ENCODE measurements at regions of chr7 and their contacts with region 1.

Region 1: GRCh38 chr7:39465055-39465929 is 100.9 kb upstream of the YAE1 start:
- DNase-seq: no peak
- ATAC-seq: peak; percentile 73 to 91
- H3K4me3 ChIP-seq: peak overlapping the region in 2 of 4 donors; percentile 11 to 18
- H3K27ac ChIP-seq: no peak overlapping the region
- H3K4me1 ChIP-seq: no peaks in the 10 kb centered on the region
- H3K27me3 ChIP-seq: no peaks in the 10 kb centered on the region
- CTCF ChIP-seq: peak; percentile 40 to 70 (median 58)
- POLR2A ChIP-seq: no peak

Region 2: GRCh38 chr7:38822549-38822948 is 642.7 kb before region 1 on chr7:
- in situ Hi-C with region 1: loop called in 1 of 4 experiments (anchors 25 kb)
- intact Hi-C with region 1: no loop called
- DNase-seq: no peak
- ATAC-seq: no peak
- H3K4me3 ChIP-seq: no peak overlapping the region
- H3K27ac ChIP-seq: no peak overlapping the region
- H3K4me1 ChIP-seq: peaks cover 0 to 13% of the 10 kb centered on the region in 2 donors
- H3K27me3 ChIP-seq: no peaks in the 10 kb centered on the region
- CTCF ChIP-seq: no peak
- POLR2A ChIP-seq: no peak

Region 3: DNA sequence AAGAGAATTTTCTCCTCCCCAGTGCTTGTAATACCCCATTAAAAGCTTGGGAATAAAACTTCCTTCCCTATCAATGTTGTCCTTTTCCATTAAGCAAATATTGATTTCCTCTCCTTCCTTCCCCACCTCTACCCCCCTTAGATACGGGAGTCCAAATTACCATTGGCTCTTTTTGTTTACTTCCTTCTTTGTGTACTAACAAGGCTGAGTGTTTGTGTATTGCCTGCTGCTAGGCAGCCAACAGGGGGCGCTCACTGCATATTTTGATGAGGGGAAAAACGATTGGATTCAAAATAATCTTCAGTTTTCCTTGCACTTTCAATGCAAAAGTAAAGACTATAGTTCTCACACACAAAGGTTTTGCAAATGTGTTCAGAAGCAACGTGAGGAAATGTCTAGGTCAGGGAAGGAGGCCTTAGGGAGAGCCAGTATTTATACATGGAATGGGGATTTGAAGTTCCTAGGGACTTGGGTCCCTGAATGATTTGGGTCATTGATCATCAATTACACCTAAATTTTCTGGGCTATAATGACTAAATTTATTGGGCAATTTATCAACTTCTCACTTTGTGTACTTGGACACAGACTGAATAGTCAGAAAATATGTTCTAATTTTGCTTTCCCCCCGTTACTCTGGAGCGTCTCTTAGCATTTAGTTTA is 532.7 kb before region 1 on chr7:
- in situ Hi-C with region 1: loop called (anchors 10 to 25 kb)
- intact Hi-C with region 1: no loop called
- DNase-seq: peak in 1 of 2 donors; percentile 15
- ATAC-seq: no peak
- H3K4me3 ChIP-seq: no peak overlapping the region
- H3K27ac ChIP-seq: no peak overlapping the region
- H3K4me1 ChIP-seq: no peaks in the 10 kb centered on the region
- H3K27me3 ChIP-seq: no peaks in the 10 kb centered on the region
- CTCF ChIP-seq: peak; percentile 41 to 70 (median 51)
- POLR2A ChIP-seq: no peak

Region 4: GRCh38 chr7:39741942-39742623 is 276.8 kb after region 1 on chr7:
- in situ Hi-C with region 1: no loop called
- intact Hi-C with region 1: no loop called
- DNase-seq: no peak
- ATAC-seq: no peak
- H3K4me3 ChIP-seq: no peak overlapping the region
- H3K27ac ChIP-seq: no peak overlapping the region
- H3K4me1 ChIP-seq: no peaks in the 10 kb centered on the region
- H3K27me3 ChIP-seq: no peaks in the 10 kb centered on the region
- CTCF ChIP-seq: peak in 1 of 5 experiments; percentile 20
- POLR2A ChIP-seq: no peak